Endothelial cell of umbilical vein (primary cell): ENCODE measurements at regions of chr4 and their contacts with region 1.

Region 1: DNA sequence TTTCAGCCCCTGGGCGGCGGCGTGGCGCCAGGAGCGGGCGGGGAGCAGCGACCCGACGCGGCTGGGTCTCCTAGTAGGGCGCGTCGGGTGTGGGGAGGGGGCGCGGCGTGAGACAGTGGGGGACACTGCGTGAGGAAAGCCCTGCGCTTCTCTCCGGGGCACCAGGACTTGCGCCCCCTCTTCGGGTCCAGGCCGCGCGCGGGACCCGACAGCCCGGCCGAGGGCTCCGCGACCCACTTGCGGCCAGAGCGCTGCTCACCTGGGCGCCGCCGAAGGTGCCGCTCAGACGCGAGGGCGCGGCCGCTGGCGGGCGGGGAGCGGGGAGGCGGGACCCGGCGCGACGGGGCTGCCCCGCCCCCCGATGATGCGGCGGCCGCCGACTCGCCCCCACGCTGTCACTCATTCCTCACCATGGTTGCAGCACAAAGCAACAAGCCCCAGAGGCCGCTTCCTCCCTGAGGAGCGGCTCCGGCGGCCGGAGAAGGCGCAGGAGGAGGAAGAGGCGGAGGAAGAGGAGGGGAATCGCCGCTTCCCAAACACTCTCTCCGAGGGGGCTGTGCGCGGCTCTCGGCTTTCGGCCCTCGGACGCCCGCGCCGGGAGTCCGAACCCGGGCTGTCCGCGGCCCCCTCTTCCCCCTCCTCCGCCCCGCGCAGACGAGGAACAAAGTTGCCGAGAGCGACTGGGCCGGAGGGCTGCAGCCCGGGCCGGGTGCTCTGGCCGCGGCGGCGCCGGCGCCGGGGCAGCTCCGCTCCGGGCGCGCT is at the start of gene RAPGEF2:
- DNase-seq: peak; percentile 93
- H3K4me3 ChIP-seq: peak within 1 kb of the TSS; percentile 62 to 97 (median 95)
- H3K27ac ChIP-seq: peak within 1 kb of the TSS; percentile 96
- H3K4me1 ChIP-seq: peaks cover 29% of the 10 kb centered on the region
- H3K27me3 ChIP-seq: no peaks in the 10 kb centered on the region
- CTCF ChIP-seq: no peak
- POLR2A ChIP-seq: peak; percentile 59
- total RNA-seq, gene RAPGEF2: 55.2 and 61.6 TPM in 2 replicates

Region 2: DNA sequence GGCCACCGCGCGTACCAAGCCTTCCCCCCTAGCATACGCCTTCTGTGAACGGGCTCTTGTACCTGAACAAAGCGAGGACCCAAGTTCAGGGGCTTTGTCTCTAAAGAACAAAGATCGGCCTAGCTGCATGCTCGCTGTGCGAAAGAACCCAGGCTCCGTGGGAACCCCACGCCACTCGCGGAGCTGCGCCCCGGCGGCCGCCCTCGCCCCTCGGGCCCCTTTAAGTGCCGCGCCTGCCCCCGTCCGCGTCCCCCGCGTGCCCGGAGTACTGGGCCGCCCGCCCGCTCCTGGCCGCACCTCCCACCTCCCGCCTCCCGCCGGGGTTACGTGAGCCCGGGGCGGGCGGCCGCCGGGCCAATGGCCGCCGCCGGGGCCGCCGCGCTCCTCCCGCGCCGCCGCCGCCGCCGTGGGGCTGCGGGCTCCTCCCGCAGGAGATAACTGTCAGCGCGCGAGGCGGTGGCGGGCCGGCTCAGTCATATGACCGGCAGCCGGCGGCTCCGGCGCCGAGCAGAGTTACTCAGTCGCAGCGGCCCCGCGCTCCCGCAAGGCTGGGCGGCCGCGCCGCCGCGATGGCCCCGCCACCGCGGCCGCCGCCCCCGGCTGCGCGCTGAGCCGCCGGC is 334.1 kb before region 1 on chr4 and contains the start of gene FNIP2:
- CTCF ChIA-PET with region 1: no interaction called
- POLR2A ChIA-PET with region 1: no interaction called
- dilution Hi-C with region 1: no loop called
- intact Hi-C with region 1: loop called (anchors 1 kb)
- DNase-seq: peak; percentile 80
- H3K4me3 ChIP-seq: peak within 1 kb of the TSS; percentile 59 to 80 (median 75)
- H3K27ac ChIP-seq: peak within 1 kb of the TSS; percentile 68
- H3K4me1 ChIP-seq: peaks cover 31% of the 10 kb centered on the region
- H3K27me3 ChIP-seq: no peaks in the 10 kb centered on the region
- CTCF ChIP-seq: no peak
- POLR2A ChIP-seq: peak; percentile 53
- total RNA-seq, gene FNIP2: 13.6 and 14.4 TPM in 2 replicates

Region 3: DNA sequence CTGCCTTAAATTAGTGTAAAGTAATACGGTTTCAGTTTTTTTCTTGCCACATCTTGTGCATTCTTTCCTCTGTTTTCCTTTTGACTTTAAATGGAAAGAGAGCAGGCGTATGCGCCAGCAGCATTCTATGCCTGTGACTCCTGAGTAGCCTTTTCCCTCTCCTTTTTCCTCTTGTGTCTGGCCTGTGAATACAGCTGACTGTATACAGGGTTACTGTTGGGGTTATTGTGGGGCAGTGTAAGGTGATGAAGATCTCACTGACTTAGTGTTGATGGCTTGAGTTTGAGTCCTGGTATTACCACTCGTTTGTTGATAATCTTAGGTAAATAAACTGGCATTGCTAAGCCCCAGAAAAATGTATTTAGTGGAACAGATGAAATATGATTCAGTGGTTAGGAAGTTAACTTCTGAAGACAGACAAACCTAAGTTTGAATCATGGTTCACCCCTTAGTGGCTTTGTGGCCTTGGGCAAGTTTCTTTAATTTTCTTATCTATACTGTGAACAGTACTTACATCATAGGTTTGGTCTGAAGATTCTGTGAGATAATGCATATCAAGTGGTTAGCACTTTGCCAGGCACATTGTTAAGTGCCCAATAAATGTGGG is 228.9 kb before region 1 on chr4:
- CTCF ChIA-PET with region 1: interaction called, 6 read pairs
- POLR2A ChIA-PET with region 1: no interaction called
- dilution Hi-C with region 1: no loop called
- intact Hi-C with region 1: loop called (anchors 5 kb)
- DNase-seq: peak; percentile 81
- H3K4me3 ChIP-seq: no peak overlapping the region
- H3K27ac ChIP-seq: peak overlapping the region; percentile 56
- H3K4me1 ChIP-seq: peaks cover 15% of the 10 kb centered on the region
- H3K27me3 ChIP-seq: no peaks in the 10 kb centered on the region
- CTCF ChIP-seq: no peak
- POLR2A ChIP-seq: no peak

Region 4: DNA sequence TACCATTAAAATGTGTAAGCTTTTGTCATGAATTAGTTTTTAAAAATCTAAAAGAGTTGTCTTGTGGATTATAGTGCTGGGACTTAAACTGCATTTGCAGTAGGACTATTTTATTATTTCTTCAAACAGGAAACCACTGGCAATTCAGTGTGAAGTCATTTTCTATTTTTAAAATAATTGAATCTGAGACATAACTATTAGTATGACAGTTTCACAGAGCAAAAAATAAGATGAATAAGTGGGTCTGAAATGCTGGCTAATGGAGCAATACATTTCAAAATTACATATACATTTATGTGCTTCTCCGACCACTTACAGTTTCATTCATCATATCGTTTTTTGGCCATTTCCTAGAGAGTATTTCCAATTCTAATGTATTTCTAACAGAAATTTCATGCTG is 75.3 kb before region 1 on chr4:
- CTCF ChIA-PET with region 1: no interaction called
- POLR2A ChIA-PET with region 1: no interaction called
- dilution Hi-C with region 1: no loop called
- intact Hi-C with region 1: loop called (anchors 1 kb)
- DNase-seq: peak; percentile 73
- H3K4me3 ChIP-seq: no peak overlapping the region
- H3K27ac ChIP-seq: peak overlapping the region; percentile 45
- H3K4me1 ChIP-seq: peaks cover 24% of the 10 kb centered on the region
- H3K27me3 ChIP-seq: no peaks in the 10 kb centered on the region
- CTCF ChIP-seq: no peak
- POLR2A ChIP-seq: no peak

Region 5: GRCh38 chr4:159175085-159175988 is 72.5 kb after region 1 on chr4:
- CTCF ChIA-PET with region 1: interaction called, 5 read pairs
- POLR2A ChIA-PET with region 1: no interaction called
- dilution Hi-C with region 1: no loop called
- intact Hi-C with region 1: loop called (anchors 1 kb)
- DNase-seq: peak; percentile 93
- H3K4me3 ChIP-seq: peak overlapping the region in 1 of 3 experiments; percentile 72
- H3K27ac ChIP-seq: peak overlapping the region; percentile 63
- H3K4me1 ChIP-seq: peaks cover 42% of the 10 kb centered on the region
- H3K27me3 ChIP-seq: no peaks in the 10 kb centered on the region
- CTCF ChIP-seq: peak; percentile 60 to 62
- POLR2A ChIP-seq: peak; percentile 27

Region 6: GRCh38 chr4:159446266-159446976 is 343.6 kb after region 1 on chr4:
- CTCF ChIA-PET with region 1: no interaction called
- POLR2A ChIA-PET with region 1: no interaction called
- dilution Hi-C with region 1: no loop called
- intact Hi-C with region 1: loop called (anchors 1 kb)
- DNase-seq: peak; percentile 76
- H3K4me3 ChIP-seq: no peak overlapping the region
- H3K27ac ChIP-seq: no peak overlapping the region
- H3K4me1 ChIP-seq: no peaks in the 10 kb centered on the region
- H3K27me3 ChIP-seq: no peaks in the 10 kb centered on the region
- CTCF ChIP-seq: peak; percentile 78 to 81
- POLR2A ChIP-seq: no peak

Region 7: GRCh38 chr4:159655547-159655946 is 552.7 kb after region 1 on chr4:
- CTCF ChIA-PET with region 1: no interaction called
- POLR2A ChIA-PET with region 1: no interaction called
- dilution Hi-C with region 1: no loop called
- intact Hi-C with region 1: no loop called
- DNase-seq: no peak
- H3K4me3 ChIP-seq: no peak overlapping the region
- H3K27ac ChIP-seq: no peak overlapping the region
- H3K4me1 ChIP-seq: no peaks in the 10 kb centered on the region
- H3K27me3 ChIP-seq: no peaks in the 10 kb centered on the region
- CTCF ChIP-seq: no peak
- POLR2A ChIP-seq: no peak